ENCODE measurements at regions of chr19 and their contacts with region 1.

Region 1: GRCh38 chr19:49640113-49640898 is at the start of gene RRAS:
- DNase-seq: peak; percentile 99 to 100
- ATAC-seq: peak; percentile 62 to 76
- H3K4me3 ChIP-seq: peak within 1 kb of the TSS; percentile 94
- H3K27ac ChIP-seq: peak within 1 kb of the TSS; percentile 97 to 99
- H3K4me1 ChIP-seq: peaks cover 37% of the 10 kb centered on the region
- CTCF ChIP-seq: no peak
- EP300 ChIP-seq: peak; percentile 13 to 42; a peak in 1 of 5 replicates
- POLR2A ChIP-seq: no peak; the same call in none of the 2 replicates
- RAD21 ChIP-seq: no peak; a peak in 1 of 5 replicates
- polyA plus RNA-seq, gene RRAS: 45.9 and 47.6 TPM in 2 replicates

Region 2: GRCh38 chr19:49340069-49340864 is 300.0 kb before region 1 on chr19:
- CTCF ChIA-PET with region 1: no interaction called
- POLR2A ChIA-PET with region 1: no interaction called
- DNase-seq: no peak
- ATAC-seq: peak in 1 of 2 experiments; percentile 11; a peak in 2 of 6 replicates
- H3K4me3 ChIP-seq: no peak overlapping the region
- H3K27ac ChIP-seq: no peak overlapping the region
- H3K4me1 ChIP-seq: no peaks in the 10 kb centered on the region
- CTCF ChIP-seq: no peak
- EP300 ChIP-seq: no peak
- POLR2A ChIP-seq: no peak
- RAD21 ChIP-seq: no peak

Region 3: DNA sequence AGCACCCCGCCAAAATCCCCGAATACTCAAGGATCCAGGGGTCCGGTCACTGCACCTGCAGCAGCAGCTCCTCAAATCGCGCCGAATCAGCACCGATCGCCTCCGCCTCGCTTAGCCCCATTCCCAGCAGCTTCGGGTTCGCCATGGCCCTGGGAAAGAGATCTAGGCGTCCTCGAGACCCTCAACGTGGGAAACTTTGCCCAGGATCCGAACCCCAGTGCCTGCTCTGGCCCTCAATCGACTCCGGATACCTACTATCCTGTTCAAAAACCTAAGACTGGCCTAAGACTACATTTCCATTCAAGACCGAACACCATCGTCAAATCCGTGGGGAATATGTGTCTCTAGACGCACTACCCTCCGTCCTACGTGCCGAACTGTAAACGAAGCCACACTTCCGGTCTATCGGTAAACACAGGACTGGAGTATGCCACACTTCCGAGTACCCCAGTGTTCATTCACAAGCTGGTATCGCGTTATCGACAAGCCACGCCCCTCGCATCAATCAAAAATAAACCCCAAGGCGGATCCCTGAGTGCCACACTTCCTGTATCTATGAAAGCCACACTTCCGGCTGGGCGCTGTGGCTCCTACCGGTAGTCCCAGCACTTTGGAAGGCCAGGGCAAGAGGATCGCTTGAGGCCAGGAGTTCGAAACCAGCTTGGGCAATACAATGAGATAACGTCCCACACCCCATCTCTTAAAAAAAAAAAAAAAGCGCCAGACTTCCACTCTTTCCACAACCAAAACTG is 188.7 kb before region 1 on chr19 and contains the start of gene PIH1D1:
- CTCF ChIA-PET with region 1: no interaction called
- POLR2A ChIA-PET with region 1: interaction called, 10 read pairs
- DNase-seq: peak; percentile 99 to 100
- ATAC-seq: peak; percentile 76 to 79
- H3K4me3 ChIP-seq: peak within 1 kb of the TSS; percentile 90
- H3K27ac ChIP-seq: peak within 1 kb of the TSS; percentile 93 to 99
- H3K4me1 ChIP-seq: peaks cover 25% of the 10 kb centered on the region
- CTCF ChIP-seq: no peak
- EP300 ChIP-seq: no peak
- POLR2A ChIP-seq: peak; percentile 85
- RAD21 ChIP-seq: no peak
- polyA plus RNA-seq, gene PIH1D1: 74.1 and 89.7 TPM in 2 replicates

Region 4: DNA sequence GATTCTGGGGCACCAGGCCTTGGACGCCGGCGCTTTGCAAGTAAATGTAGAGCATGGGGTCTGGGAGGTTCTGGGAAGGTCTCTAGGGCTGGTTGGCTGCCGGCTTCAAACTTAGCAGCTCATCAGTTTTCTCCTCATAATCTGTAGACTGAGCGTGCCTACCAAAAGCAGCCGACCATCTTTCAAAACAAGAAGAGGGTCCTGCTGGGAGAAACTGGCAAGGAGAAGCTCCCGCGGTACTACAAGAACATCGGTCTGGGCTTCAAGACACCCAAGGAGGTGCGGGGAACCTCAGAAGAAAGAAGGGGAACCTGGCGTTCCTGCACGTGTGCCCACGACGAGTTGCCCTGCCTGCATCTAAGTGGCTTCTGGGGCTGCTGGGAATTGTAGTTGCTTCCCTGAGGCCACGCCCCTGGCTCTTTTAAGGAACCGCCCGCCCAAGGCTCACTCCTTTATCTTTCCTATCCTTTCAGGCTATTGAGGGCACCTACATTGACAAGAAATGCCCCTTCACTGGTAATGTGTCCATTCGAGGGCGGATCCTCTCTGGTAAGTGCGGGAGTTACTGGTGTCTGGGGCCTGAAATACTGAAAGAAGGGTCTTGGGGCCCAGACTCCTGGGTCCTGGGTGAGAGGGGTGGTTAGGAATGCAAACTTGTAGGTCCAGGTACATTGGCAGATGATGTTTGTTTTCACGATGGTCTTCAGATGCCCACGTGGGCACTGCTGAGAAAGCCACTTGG is 143.1 kb before region 1 on chr19:
- CTCF ChIA-PET with region 1: no interaction called
- POLR2A ChIA-PET with region 1: interaction called, 13 read pairs
- DNase-seq: peak; percentile 77 to 79
- ATAC-seq: peak in 1 of 2 experiments; percentile 7; a peak in 2 of 6 replicates
- H3K4me3 ChIP-seq: peak overlapping the region; percentile 97
- H3K27ac ChIP-seq: peak overlapping the region; percentile 93 to 97
- H3K4me1 ChIP-seq: peaks cover 34% of the 10 kb centered on the region
- CTCF ChIP-seq: no peak
- EP300 ChIP-seq: no peak
- POLR2A ChIP-seq: peak; percentile 64
- RAD21 ChIP-seq: no peak

Region 5: GRCh38 chr19:49580264-49581006 is 59.9 kb before region 1 on chr19 and contains the start of gene NOSIP:
- CTCF ChIA-PET with region 1: interaction called, 3 read pairs
- POLR2A ChIA-PET with region 1: interaction called, 30 read pairs
- DNase-seq: peak; percentile 94 to 99
- ATAC-seq: peak; percentile 98 to 99
- H3K4me3 ChIP-seq: peak within 1 kb of the TSS; percentile 63
- H3K27ac ChIP-seq: peak within 1 kb of the TSS; percentile 68 to 88
- H3K4me1 ChIP-seq: peaks cover 8% of the 10 kb centered on the region; the same call in 2 of the 3 replicates
- CTCF ChIP-seq: no peak
- EP300 ChIP-seq: no peak
- POLR2A ChIP-seq: peak; percentile 99
- RAD21 ChIP-seq: 0 out of 5 replicates have a peak, but pooled peaks of 1 of the 2 experiments have one; percentile 4
- polyA plus RNA-seq, gene NOSIP: 49.0 and 52.5 TPM in 2 replicates

Region 6: GRCh38 chr19:49590071-49590970 is 50.0 kb before region 1 on chr19:
- CTCF ChIA-PET with region 1: interaction called, 3 read pairs
- POLR2A ChIA-PET with region 1: interaction called, 45 read pairs
- DNase-seq: peak; percentile 97 to 99
- ATAC-seq: peak; percentile 49 to 84
- H3K4me3 ChIP-seq: peak overlapping the region; percentile 63
- H3K27ac ChIP-seq: peak overlapping the region; percentile 97 to 99
- H3K4me1 ChIP-seq: peaks cover 11% of the 10 kb centered on the region
- CTCF ChIP-seq: no peak; the same call in 2 of the 3 replicates
- EP300 ChIP-seq: no peak
- POLR2A ChIP-seq: peak; percentile 75
- RAD21 ChIP-seq: no peak

Region 7: GRCh38 chr19:49655570-49656455 is 15.5 kb after region 1 on chr19:
- CTCF ChIA-PET with region 1: interaction called, 117 read pairs
- POLR2A ChIA-PET with region 1: interaction called, 14 read pairs
- DNase-seq: no peak
- ATAC-seq: no peak
- H3K4me3 ChIP-seq: no peak overlapping the region
- H3K27ac ChIP-seq: no peak overlapping the region
- H3K4me1 ChIP-seq: no peaks in the 10 kb centered on the region
- CTCF ChIP-seq: no peak
- EP300 ChIP-seq: no peak
- POLR2A ChIP-seq: no peak
- RAD21 ChIP-seq: no peak

Region 8: DNA sequence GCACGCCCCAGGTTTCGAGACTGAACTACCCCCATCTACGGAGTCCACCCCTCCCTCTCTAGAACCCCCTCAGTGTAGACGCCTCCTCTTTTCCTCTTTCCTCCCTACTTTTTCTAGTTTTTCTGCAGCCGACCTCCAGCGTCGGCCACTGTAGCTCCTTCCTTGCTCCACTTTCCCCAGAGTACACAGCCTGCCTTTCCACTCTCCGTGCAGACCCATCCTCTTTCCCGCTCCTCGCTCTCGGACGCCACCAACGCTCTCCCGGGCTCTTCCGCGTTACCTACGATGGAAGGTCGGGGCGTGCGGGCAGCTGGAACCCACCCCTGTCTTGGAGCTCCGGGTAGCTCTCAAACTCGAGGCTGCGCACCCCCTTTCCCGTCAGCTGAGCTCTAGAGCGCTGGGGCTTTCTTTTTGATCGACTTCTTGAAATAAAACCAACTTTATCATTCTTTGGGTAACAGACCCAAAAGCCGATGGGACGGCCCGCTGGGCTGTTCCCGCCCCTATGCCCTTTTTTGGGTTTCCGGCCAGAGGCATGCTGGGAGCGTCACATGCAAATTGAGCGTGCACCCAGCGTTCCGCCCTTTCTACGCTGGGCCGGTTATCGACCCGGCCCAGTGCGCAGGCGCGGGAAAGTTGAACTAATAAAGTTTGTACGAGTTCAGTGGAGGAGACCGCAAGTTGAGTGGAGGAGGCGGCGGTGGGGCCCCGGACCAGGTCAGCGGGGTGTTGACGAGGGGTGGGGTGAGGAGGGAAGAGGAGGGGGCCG is 25.2 kb after region 1 on chr19 and contains the starts of genes BCL2L12 and IRF3:
- CTCF ChIA-PET with region 1: interaction called, 134 read pairs
- POLR2A ChIA-PET with region 1: interaction called, 22 read pairs
- DNase-seq: peak; percentile 96 to 98
- ATAC-seq: peak; percentile 75 to 87
- H3K4me3 ChIP-seq: peak within 1 kb of the TSS; percentile 65
- H3K27ac ChIP-seq: peak within 1 kb of the TSS; percentile 79 to 86
- H3K4me1 ChIP-seq: peaks cover 14% of the 10 kb centered on the region
- CTCF ChIP-seq: no peak
- EP300 ChIP-seq: peak in 1 of 2 experiments; percentile 19; a peak in 1 of 5 replicates
- POLR2A ChIP-seq: peak; percentile 45
- RAD21 ChIP-seq: no peak
- polyA plus RNA-seq, gene BCL2L12: 26.6 and 29.2 TPM in 2 replicates
- polyA plus RNA-seq, gene IRF3: 54.0 and 68.6 TPM in 2 replicates

Region 9: DNA sequence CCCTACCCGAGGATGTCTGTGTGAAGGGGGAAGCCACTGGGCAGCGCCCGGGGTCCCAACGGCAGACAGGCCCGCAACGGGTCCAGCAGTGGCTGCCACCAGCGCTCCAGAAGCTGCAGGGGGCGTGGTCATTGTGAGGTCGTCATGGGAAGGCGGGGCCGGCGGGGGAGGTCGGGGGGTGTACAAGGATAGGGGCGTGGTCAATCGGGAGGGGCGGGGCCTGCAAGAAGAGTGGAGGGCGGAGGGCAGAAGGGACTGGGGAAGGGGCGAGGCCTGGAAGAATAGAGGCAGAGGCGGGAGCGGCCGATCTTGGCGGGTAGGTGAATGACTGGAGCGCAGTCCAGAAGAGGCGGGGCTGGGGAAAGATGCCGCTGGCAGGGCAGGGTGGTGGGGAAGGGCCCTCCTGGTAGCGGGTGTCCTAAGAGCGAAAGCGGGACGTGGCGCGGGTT is 168.4 kb after region 1 on chr19:
- CTCF ChIA-PET with region 1: no interaction called
- POLR2A ChIA-PET with region 1: no interaction called
- DNase-seq: peak; percentile 87 to 88
- ATAC-seq: peak; percentile 35 to 46
- H3K4me3 ChIP-seq: peak overlapping the region; percentile 62
- H3K27ac ChIP-seq: peak overlapping the region; percentile 58 to 72
- H3K4me1 ChIP-seq: peaks cover 16% of the 10 kb centered on the region
- CTCF ChIP-seq: no peak
- EP300 ChIP-seq: no peak
- POLR2A ChIP-seq: no peak
- RAD21 ChIP-seq: no peak

Region 10: DNA sequence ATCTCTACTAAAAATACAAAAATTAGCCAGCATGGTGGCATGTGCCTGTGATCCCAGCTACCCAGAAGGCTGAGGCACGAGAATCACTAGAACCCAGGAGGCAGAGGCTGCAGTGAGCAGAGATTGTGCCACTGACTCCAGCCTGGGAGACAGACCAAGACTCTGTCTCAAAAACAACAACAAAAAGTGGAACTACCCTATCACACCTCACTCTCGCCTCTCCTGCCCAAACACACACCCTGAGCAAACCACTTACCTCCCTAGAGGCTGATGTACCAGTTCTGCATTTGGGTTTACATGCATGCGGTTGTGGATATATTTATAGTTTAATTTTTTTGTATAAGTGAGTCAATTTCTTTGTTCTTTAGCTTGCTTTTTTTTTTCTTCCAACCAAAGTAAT is 203.0 kb after region 1 on chr19:
- CTCF ChIA-PET with region 1: no interaction called
- POLR2A ChIA-PET with region 1: no interaction called
- DNase-seq: no peak
- ATAC-seq: no peak
- H3K4me3 ChIP-seq: no peak overlapping the region
- H3K27ac ChIP-seq: no peak overlapping the region
- H3K4me1 ChIP-seq: no peaks in the 10 kb centered on the region
- CTCF ChIP-seq: no peak
- EP300 ChIP-seq: no peak
- POLR2A ChIP-seq: no peak
- RAD21 ChIP-seq: no peak